Sciatic nerve (tissue), 2 donors: ENCODE measurements at regions of chr4 and their contacts with region 1.

Region 1: DNA sequence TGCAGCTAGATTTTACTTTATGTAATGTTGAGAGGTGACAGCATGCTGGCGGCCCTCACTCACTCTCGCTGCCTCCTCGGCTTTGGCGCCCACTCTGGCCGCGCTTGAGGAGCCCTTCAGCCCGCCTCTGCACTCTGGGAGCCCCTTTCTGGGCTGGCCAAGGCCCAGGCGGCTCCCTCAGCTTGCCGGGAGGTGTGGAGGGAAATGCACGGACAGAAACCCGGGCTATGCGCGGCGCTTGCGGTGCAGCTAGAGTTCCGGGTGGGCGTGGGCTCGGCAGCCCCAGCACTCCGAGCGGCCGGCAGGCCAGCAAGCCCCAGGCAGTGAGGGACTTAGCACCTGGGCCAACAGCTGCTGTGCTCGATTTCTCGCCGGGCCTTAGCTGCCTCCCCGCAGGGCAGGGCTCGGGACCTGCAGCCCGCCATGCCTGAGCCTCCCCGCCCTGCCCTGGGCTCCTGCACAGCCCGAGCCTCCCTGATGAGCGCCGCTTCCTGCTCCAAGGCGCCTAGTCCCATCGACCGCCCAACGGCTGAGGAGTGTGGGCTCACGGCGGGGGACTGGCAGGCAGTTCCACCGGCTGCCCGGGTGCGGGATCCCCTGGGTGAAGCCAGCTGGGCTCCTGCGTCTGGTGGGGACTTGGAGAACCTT is 128.7 kb downstream of the GASK1B start:
- DNase-seq: no peak
- ATAC-seq: no peak

Region 2: GRCh38 chr4:158005021-158005420 is 39.1 kb before region 1 on chr4:
- intact Hi-C with region 1: loop called (anchors 2 kb)
- DNase-seq: no peak
- ATAC-seq: no peak